ENCODE measurements at regions of chr12 and their contacts with region 1.

Region 1: GRCh38 chr12:49322708-49323523 is at the start of gene TROAP:
- DNase-seq: peak; percentile 99
- ATAC-seq: peak; percentile 99
- H3K4me3 Mint-ChIP-seq: peak within 1 kb of the TSS; percentile 100
- H3K27ac Mint-ChIP-seq: peak within 1 kb of the TSS; percentile 99
- H3K4me1 Mint-ChIP-seq: peaks cover 32% of the 10 kb centered on the region
- H3K27me3 Mint-ChIP-seq: peaks cover 2% of the 10 kb centered on the region
- total RNA-seq, gene TROAP: 107 to 111 TPM

Region 2: DNA sequence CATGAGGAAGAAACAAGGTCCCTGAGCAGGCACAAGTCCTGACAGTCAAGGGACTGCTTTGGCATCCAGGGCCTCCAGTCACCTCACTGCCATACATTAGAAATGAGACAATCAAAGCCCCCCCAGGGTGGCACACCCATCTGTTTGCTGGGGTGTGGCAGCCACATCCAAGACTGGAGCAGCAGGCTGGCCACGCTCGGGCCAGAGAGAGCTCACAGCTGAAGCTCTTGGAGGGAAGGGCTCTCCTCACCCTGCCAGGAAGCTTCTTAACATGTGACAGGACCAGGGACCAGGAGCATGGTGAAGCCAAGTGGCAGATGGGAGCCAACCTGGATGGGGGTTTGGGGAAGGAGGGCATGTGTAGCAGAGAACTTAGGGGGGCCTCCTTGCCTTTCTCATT is 494.6 kb before region 1 on chr12:
- CTCF ChIA-PET with region 1: no interaction called
- POLR2A ChIA-PET with region 1: no interaction called
- DNase-seq: no peak
- ATAC-seq: no peak
- H3K4me3 Mint-ChIP-seq: no peak overlapping the region
- H3K27ac Mint-ChIP-seq: no peak overlapping the region
- H3K4me1 Mint-ChIP-seq: no peaks in the 10 kb centered on the region
- H3K27me3 Mint-ChIP-seq: no peaks in the 10 kb centered on the region

Region 3: DNA sequence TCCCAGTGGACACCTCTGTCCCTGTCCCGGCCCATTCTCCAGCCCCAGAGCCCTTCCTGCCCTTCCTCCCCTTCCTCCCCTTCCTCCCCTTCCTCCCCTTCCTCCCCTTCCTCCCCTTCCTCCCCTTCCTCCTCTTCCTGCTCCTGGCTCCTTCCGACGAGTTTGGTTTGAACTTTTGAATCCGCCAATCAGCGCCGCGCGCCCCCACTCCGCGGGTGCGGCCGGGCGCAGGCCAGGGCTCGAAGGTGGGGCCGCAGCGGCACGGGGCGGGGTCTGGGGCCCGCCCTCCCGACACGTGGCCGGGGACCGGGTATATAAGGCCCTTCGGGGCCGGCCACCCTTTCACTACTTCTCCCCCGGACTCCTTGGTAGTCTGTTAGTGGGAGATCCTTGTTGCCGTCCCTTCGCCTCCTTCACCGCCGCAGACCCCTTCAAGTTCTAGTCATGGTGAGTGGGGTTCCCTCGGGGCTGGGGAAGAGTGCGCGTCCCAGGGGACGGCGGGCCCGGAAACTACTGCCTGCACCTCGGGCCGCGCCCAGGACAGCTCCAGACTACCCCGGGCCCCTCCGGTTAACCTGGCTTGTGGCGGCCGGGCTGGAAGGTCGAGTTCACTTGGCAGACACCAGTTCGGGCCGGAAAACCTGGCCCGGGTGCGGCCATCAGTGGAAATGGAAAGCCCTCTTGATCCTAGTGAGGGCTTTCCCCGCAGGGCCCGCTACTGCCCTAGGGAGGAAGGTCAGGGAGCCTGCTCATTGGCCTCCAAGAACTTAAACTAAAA is 58.0 kb before region 1 on chr12 and contains the start of gene TUBA1C:
- CTCF ChIA-PET with region 1: no interaction called
- POLR2A ChIA-PET with region 1: interaction called, 22 read pairs
- DNase-seq: peak; percentile 94
- ATAC-seq: peak; percentile 88
- H3K4me3 Mint-ChIP-seq: peak within 1 kb of the TSS; percentile 99
- H3K27ac Mint-ChIP-seq: peak within 1 kb of the TSS; percentile 99
- H3K4me1 Mint-ChIP-seq: peaks cover 47% of the 10 kb centered on the region
- H3K27me3 Mint-ChIP-seq: no peaks in the 10 kb centered on the region
- total RNA-seq, gene TUBA1C: 308 to 324 TPM

Region 4: GRCh38 chr12:49288412-49288853 is 34.5 kb before region 1 on chr12:
- CTCF ChIA-PET with region 1: interaction called, 11 read pairs
- POLR2A ChIA-PET with region 1: interaction called, 3 read pairs
- DNase-seq: peak; percentile 82
- ATAC-seq: peak; percentile 59
- H3K4me3 Mint-ChIP-seq: no peak overlapping the region
- H3K27ac Mint-ChIP-seq: no peak overlapping the region
- H3K4me1 Mint-ChIP-seq: peaks cover 5% of the 10 kb centered on the region
- H3K27me3 Mint-ChIP-seq: peaks cover 18% of the 10 kb centered on the region

Region 5: GRCh38 chr12:49296034-49296835 is 26.7 kb before region 1 on chr12:
- CTCF ChIA-PET with region 1: interaction called, 15 read pairs
- POLR2A ChIA-PET with region 1: interaction called, 7 read pairs
- DNase-seq: peak; percentile 76
- ATAC-seq: peak; percentile 73
- H3K4me3 Mint-ChIP-seq: peak overlapping the region; percentile 63
- H3K27ac Mint-ChIP-seq: no peak overlapping the region
- H3K4me1 Mint-ChIP-seq: peaks cover 22% of the 10 kb centered on the region
- H3K27me3 Mint-ChIP-seq: peaks cover 51% of the 10 kb centered on the region

Region 6: DNA sequence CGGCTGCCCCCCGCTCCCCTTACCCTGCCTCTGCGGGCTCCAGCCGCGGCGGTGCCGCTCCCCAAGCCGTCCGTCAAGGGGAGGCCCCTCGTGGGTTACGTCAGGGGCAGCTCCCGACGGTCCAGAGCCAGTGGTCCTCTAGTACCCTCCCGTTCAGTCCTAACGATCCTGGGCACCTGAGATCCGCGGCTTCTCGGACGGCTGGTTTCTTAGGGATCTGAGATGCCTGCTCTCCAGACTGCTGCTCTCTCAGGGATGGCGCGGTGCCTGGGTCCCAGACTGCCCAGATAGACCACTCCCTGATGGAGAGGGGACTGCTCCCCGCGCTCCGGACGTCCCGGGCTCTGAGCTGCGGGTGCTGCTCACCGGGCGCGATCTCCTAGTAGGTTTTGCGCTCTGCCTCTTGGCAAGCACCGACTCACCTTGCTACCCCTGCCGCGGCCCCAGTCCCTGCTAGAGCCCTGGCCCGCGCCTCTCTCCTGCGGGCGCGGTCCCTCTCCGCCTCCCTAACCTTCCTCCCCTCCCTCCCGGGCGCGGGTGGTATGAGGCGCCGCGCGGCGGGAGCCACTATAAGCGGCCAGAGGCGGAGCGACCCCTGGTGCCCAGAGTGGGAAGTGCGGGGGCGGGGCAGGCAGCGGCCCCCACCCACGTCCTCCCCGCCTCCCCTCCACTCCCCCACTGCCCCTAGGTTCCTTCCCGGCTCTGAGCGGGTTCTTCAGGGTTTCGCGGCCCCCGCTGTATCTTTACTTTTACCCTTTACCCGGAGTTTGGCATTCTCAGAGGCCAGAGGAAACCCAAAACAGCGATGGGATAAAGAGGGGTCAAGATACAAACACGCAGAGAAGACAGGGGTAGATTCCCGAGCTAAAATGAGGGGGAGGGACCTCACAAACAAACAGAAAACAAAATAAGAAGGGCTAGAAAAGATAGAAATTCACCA is 14.0 kb after region 1 on chr12 and contains the start of gene C1QL4:
- CTCF ChIA-PET with region 1: interaction called, 43 read pairs
- POLR2A ChIA-PET with region 1: interaction called, 12 read pairs
- DNase-seq: peak; percentile 88
- ATAC-seq: peak; percentile 81
- H3K4me3 Mint-ChIP-seq: peak within 1 kb of the TSS; percentile 53
- H3K27ac Mint-ChIP-seq: no peak within 1 kb of the TSS
- H3K4me1 Mint-ChIP-seq: peaks cover 19% of the 10 kb centered on the region
- H3K27me3 Mint-ChIP-seq: peaks cover 78% of the 10 kb centered on the region
- total RNA-seq, gene C1QL4: not detected

Region 7: DNA sequence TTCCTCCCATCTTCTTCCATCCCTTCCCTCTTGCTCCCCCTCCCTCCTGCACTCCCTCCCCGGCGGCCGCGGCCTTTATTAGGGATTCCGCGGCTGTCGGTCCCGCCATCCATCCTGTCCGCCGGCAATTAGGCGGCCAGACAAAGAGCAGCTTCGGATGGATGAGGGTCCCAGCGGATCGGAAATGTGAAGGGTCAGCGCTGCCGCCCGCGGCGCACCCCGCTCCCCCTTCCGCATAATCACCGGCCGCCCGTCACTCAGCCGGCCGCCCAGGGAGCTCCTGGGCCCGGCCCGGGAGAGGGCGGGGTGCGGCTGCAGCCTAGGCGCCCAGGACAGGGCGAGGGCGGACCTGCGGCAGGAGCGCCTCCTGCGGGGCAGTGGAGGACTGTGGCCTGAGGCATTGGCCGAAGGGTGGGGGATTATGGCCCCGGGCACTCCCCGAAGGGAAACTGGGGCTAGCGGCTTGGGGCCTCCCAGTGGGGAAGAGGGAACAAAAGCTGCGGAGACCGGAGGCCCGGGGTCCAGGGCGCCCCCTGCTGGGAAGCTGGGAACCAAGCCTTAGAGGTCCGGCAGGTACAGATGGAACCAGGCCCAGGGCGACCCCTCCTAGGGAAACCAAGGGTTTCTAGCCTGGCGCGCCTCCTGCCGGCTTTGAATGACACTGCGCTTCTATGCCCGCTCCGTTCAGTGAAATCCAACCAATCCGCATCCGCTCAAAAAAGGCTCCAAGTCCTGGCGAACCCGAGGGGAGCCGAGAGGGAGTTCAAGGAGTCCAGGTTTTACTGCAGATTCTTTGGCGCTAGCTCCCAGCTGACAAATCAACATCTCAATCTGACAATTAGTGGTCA is 19.4 kb after region 1 on chr12:
- CTCF ChIA-PET with region 1: interaction called, 43 read pairs
- POLR2A ChIA-PET with region 1: interaction called, 12 read pairs
- DNase-seq: peak; percentile 84
- ATAC-seq: peak; percentile 73
- H3K4me3 Mint-ChIP-seq: peak overlapping the region; percentile 34
- H3K27ac Mint-ChIP-seq: no peak overlapping the region
- H3K4me1 Mint-ChIP-seq: peaks cover 39% of the 10 kb centered on the region
- H3K27me3 Mint-ChIP-seq: peaks cover 88% of the 10 kb centered on the region

Region 8: GRCh38 chr12:49366652-49367380 is 43.9 kb after region 1 on chr12:
- CTCF ChIA-PET with region 1: no interaction called
- POLR2A ChIA-PET with region 1: interaction called, 20 read pairs
- DNase-seq: peak; percentile 90
- ATAC-seq: peak; percentile 89
- H3K4me3 Mint-ChIP-seq: peak overlapping the region; percentile 97
- H3K27ac Mint-ChIP-seq: peak overlapping the region; percentile 98
- H3K4me1 Mint-ChIP-seq: peaks cover 38% of the 10 kb centered on the region
- H3K27me3 Mint-ChIP-seq: no peaks in the 10 kb centered on the region

Region 9: GRCh38 chr12:49462083-49462744 is 139.3 kb after region 1 on chr12:
- CTCF ChIA-PET with region 1: no interaction called
- POLR2A ChIA-PET with region 1: no interaction called
- DNase-seq: no peak
- ATAC-seq: no peak
- H3K4me3 Mint-ChIP-seq: no peak overlapping the region
- H3K27ac Mint-ChIP-seq: no peak overlapping the region
- H3K4me1 Mint-ChIP-seq: no peaks in the 10 kb centered on the region
- H3K27me3 Mint-ChIP-seq: no peaks in the 10 kb centered on the region